Panc1 (cell line): ENCODE measurements at regions of chr6 and their contacts with region 1.

Region 1: DNA sequence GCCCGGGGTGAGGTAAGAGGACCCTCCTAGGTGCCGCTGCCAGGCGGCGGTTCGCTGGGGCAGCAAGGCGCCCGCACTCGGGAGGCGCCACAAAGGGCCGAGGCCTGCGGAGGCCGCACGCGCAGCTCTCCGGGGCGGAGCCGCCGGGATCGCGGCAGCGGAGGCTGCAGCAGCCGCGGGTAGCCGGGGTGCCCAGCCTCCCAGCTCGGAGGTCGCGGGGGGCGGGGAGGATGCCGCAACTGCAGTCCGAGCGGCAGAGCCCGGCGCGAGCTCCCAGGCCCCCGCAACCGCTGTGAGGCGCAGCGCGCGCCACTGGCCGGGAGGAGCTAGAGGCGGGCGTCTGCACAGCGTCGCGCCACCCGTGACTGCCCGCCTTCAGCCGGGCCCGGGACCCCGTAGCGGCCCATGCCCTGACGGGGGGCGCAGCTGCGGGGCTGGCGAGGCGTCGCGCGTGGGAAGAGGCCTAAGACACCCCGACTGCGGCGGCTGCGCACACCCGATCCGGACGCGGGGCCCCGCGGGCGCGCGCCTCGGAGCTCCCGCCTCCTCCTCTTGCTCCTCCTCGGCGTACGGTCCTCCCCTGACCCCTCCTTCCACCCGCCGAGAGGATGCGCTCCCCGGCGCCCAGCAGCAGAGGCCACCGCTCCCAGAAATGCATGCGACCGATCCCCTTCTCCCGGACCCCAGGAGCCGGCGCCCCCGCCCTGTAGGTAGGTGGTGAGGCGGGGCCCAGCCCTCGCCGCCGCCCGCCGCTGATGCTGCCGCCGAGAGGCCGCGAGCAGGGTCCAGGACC is at the start of gene NCOA7:
- DNase-seq: no peak
- ATAC-seq: peak; percentile 95
- H3K4me3 ChIP-seq: peak within 1 kb of the TSS; percentile 75 to 96
- H3K27ac ChIP-seq: peak within 1 kb of the TSS; percentile 98
- H3K4me1 ChIP-seq: peaks cover 39% of the 10 kb centered on the region
- H3K27me3 ChIP-seq: no peaks in the 10 kb centered on the region
- CTCF ChIP-seq: no peak
- total RNA-seq, gene NCOA7: 37.3 TPM

Region 2: DNA sequence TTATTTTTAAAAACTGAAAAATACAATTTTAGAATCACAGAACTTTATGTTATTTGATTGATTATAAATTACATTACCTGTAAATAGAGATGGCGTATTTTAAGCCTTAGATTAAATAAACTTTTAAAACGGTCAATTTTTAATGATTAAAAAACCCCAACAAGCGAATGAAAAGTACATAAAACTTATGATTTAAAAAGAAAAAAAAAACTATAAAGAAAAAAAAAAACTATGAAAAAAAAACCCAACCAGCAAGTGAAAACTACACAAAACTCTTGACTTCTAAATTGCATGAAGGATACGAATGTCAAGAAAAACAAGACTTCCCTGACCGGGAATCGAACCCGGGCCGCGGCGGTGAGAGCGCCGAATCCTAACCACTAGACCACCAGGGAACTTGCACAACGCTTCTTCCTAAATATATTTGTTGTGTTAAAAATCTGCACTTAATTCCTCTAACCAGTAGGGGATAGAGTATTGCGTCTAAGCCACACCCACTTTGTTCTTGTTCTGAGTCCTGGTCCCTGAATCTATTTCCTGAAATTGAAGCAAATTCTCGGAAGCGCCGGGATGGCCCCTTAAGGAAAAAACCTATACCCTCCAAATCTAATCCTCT is 10.5 kb before region 1 on chr6:
- CTCF ChIA-PET with region 1: interaction called, 12 read pairs
- POLR2A ChIA-PET with region 1: interaction called, 8 read pairs
- in situ Hi-C with region 1: no loop called
- intact Hi-C with region 1: no loop called
- DNase-seq: peak; percentile 96
- ATAC-seq: peak; percentile 95
- H3K4me3 ChIP-seq: peak overlapping the region; percentile 88 to 93
- H3K27ac ChIP-seq: peak overlapping the region; percentile 97
- H3K4me1 ChIP-seq: peaks cover 5% of the 10 kb centered on the region
- H3K27me3 ChIP-seq: peaks cover 5% of the 10 kb centered on the region
- CTCF ChIP-seq: peak; percentile 17; the same call in 1 of the 2 replicates

Region 3: GRCh38 chr6:125858427-125859320 is 68.1 kb after region 1 on chr6:
- CTCF ChIA-PET with region 1: no interaction called
- POLR2A ChIA-PET with region 1: no interaction called
- in situ Hi-C with region 1: no loop called
- intact Hi-C with region 1: loop called (anchors 2 kb)
- DNase-seq: peak; percentile 18
- ATAC-seq: peak; percentile 100
- H3K4me3 ChIP-seq: no peak overlapping the region
- H3K27ac ChIP-seq: no peak overlapping the region
- H3K4me1 ChIP-seq: no peaks in the 10 kb centered on the region
- H3K27me3 ChIP-seq: no peaks in the 10 kb centered on the region
- CTCF ChIP-seq: peak; percentile 94

Region 4: GRCh38 chr6:125956506-125957390 is 166.2 kb after region 1 on chr6 and contains the start of gene HINT3:
- CTCF ChIA-PET with region 1: interaction called, 14 read pairs
- POLR2A ChIA-PET with region 1: no interaction called
- in situ Hi-C with region 1: no loop called
- intact Hi-C with region 1: no loop called
- DNase-seq: peak; percentile 92
- ATAC-seq: peak; percentile 97
- H3K4me3 ChIP-seq: peak within 1 kb of the TSS; percentile 72 to 87
- H3K27ac ChIP-seq: peak within 1 kb of the TSS; percentile 81
- H3K4me1 ChIP-seq: peaks cover 23% of the 10 kb centered on the region
- H3K27me3 ChIP-seq: no peaks in the 10 kb centered on the region
- CTCF ChIP-seq: peak; percentile 100
- total RNA-seq, gene HINT3: 11.5 TPM

Region 5: DNA sequence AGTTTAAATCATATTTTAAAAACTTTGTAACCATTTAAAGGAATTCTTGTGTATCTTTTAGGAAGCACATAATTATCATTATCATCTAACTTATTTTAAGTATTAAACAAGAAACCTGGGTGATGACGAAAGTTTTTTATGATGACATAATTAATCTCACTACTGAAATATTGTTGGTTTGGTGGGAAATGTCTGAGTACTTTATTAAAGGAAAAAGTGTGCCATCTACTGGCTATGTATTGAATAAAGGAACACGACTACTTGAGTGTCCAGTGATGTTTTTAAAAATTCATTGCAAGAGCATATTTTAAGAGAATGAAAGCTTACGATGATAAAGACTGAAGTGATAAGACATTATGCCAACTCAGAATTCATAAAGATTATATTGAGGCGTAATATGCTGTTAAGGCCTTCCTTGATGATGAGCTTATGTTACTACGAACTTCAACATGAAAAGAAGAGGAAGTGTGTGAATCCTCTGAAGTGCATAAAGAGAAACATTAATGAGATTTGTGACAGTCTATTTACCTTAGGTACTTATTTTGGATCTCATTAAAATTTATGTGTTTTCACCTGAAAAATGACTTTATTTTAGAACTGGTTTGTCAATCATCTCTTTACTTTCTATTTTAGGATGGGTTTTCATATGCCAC is 183.8 kb after region 1 on chr6:
- CTCF ChIA-PET with region 1: interaction called, 10 read pairs
- POLR2A ChIA-PET with region 1: interaction called, 3 read pairs
- in situ Hi-C with region 1: no loop called
- intact Hi-C with region 1: no loop called
- DNase-seq: no peak
- ATAC-seq: peak; percentile 91
- H3K4me3 ChIP-seq: no peak overlapping the region
- H3K27ac ChIP-seq: no peak overlapping the region
- H3K4me1 ChIP-seq: no peaks in the 10 kb centered on the region
- H3K27me3 ChIP-seq: no peaks in the 10 kb centered on the region
- CTCF ChIP-seq: peak; percentile 67; the same call in 1 of the 2 replicates

Region 6: DNA sequence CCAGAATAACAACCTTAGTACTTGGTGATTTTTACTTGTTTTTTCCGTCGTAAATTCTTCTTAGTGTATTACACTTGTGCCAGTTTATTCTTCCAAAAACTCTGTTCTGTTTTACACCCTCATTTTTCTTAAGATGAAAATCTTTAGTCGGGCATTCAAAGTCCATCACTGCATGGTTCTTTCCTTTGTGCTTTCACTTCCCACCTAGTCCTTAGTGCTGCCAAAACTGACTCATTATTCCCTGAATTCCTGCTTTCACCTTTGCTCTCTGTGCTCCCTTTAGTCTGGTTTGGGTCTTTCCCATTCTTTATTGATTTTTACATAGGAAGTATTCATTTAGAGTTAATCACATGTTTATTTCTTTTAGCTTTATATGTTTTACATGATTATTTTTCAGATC is 199.1 kb after region 1 on chr6:
- CTCF ChIA-PET with region 1: no interaction called
- POLR2A ChIA-PET with region 1: interaction called, 11 read pairs
- in situ Hi-C with region 1: no loop called
- intact Hi-C with region 1: no loop called
- DNase-seq: no peak
- ATAC-seq: no peak
- H3K4me3 ChIP-seq: no peak overlapping the region
- H3K27ac ChIP-seq: no peak overlapping the region
- H3K4me1 ChIP-seq: peaks cover 34% of the 10 kb centered on the region
- H3K27me3 ChIP-seq: no peaks in the 10 kb centered on the region
- CTCF ChIP-seq: no peak

Region 7: DNA sequence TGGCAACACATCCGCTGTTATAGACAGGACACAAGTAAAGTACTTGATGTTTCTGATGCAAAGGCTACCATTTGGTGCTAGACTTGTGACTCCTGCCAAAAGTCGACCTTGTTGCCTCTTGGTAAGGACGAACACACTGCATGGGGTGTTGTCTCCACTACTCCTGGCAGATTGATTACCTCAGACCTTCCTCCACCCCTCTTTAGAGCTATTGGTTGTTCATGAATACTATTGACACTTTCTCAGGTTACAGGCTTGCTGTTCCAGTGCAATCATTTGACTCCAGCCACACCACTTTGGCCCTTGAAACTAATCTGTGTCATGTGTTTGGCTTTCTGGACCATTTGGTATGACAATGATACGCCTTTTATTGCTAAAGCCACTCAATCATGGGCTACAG is 258.1 kb after region 1 on chr6:
- CTCF ChIA-PET with region 1: no interaction called
- POLR2A ChIA-PET with region 1: no interaction called
- in situ Hi-C with region 1: no loop called
- intact Hi-C with region 1: no loop called
- DNase-seq: no peak
- ATAC-seq: no peak
- H3K4me3 ChIP-seq: no peak overlapping the region
- H3K27ac ChIP-seq: no peak overlapping the region
- H3K4me1 ChIP-seq: no peaks in the 10 kb centered on the region
- H3K27me3 ChIP-seq: no peaks in the 10 kb centered on the region
- CTCF ChIP-seq: no peak